Esophagus muscularis mucosa (tissue), 4 donors: ENCODE measurements at regions of chr1 and their contacts with region 1.

Region 1: DNA sequence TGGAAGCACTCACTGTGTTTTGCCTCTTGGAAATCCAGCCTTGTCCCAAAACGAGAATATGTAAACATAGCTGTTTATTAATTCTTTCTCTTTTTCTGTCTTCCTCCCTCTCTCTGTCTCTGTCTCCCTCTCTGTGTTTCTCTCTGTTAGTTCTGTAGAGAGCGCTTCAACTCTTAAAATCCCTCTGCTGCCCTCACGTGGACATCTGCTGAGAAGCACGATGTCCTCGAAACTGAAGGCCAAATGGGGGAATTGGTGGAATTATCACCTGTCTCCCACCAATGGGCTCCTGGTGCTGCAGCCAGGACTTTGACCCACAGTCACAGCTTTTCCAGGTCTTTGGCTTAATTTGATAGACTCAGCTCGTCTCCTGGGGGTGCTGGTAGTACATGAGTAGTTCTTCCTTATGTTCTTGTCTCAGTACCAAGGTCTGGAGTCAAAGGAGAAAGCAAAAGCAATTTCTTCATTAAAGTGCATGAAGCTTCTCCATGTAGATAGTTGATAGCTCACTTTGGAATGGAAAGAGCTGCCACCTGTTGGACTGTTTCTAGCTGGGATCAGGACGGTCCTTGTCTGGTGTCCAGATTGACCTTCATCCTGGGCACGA is 5.5 kb upstream of the GBP6 start:
- DNase-seq: no peak
- H3K4me3 ChIP-seq: no peak overlapping the region
- H3K27ac ChIP-seq: no peak overlapping the region
- H3K4me1 ChIP-seq: peaks cover 6 to 15% (median 14%) of the 10 kb centered on the region in 4 donors
- H3K27me3 ChIP-seq: no peaks in the 10 kb centered on the region
- CTCF ChIP-seq: peak; percentile 77 to 87 (median 79)
- EP300 ChIP-seq: no peak
- POLR2A ChIP-seq: no peak

Region 2: DNA sequence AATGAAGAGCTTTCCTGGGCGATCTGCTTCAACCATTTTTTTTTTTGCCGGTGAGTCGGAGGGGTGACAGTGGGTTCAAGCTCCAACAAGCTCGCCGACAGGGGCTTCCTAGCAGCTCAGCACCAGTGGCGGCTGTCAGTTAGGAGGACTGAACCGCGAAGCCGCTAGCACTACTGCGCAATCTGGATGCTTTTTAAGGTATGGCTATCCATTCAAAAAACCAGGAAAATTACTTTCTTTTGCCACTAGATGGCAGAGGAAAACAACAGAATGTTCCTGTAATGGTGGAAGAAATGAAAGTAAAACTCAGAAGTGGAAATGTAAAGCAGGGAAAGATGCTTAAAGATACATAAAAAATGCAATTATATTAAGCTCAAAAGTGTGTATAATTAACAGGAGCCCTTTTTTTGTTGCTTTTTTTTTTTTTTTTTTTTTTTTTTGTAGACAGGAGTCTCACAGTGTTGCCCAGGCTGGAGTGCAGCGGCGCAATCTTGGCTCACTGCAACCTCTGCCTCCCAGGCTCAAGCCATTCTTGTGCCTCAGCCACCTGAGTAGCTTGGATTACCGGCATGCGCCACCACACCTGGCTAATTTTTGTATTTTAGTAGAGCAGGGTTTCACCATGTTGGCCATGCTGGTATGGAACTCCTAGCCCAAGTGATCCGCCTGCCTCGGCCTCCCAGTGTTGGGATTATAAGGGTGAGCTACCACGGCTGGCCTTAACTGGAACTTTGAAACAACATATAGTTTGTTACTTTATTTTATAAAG is 374.4 kb before region 1 on chr1:
- intact Hi-C with region 1: loop called (anchors 5 kb)
- DNase-seq: no peak
- H3K4me3 ChIP-seq: peak overlapping the region in 3 of 4 donors; percentile 1 to 22 (median 15)
- H3K27ac ChIP-seq: peak overlapping the region; percentile 35 to 63 (median 52)
- H3K4me1 ChIP-seq: peaks cover 19 to 66% (median 57%) of the 10 kb centered on the region in 4 donors
- H3K27me3 ChIP-seq: no peaks in the 10 kb centered on the region
- CTCF ChIP-seq: peak; percentile 56 to 73 (median 65)
- EP300 ChIP-seq: no peak
- POLR2A ChIP-seq: no peak

Region 3: DNA sequence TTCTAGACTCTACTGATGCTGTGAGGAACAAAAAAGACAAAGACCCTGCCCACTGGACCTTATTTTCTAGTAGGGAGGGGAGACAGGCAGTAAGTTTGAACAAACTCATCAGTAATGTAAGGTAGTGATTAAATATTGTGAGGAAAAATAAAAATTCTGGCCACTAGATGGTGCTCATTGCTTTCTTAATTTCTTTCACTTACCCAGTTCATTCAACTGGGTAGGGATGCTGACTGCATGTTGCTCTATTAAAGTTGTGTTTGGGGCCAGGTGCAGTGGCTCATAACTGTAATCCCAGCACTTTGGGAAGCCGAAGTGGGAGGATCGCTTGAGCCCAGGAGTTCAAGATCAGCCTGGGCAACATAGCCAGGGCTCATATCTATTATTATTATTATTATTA is 359.7 kb before region 1 on chr1:
- intact Hi-C with region 1: loop called (anchors 2 kb)
- DNase-seq: no peak
- H3K4me3 ChIP-seq: no peak overlapping the region
- H3K27ac ChIP-seq: no peak overlapping the region
- H3K4me1 ChIP-seq: peaks cover 0 to 10% (median 7%) of the 10 kb centered on the region in 4 donors
- H3K27me3 ChIP-seq: no peaks in the 10 kb centered on the region
- CTCF ChIP-seq: peak; percentile 54 to 64 (median 56)
- EP300 ChIP-seq: no peak
- POLR2A ChIP-seq: no peak

Region 4: GRCh38 chr1:89064632-89065031 is 293.8 kb before region 1 on chr1:
- intact Hi-C with region 1: loop called (anchors 5 kb)
- DNase-seq: no peak
- H3K4me3 ChIP-seq: peak overlapping the region; percentile 56 to 70 (median 63)
- H3K27ac ChIP-seq: peak overlapping the region; percentile 84 to 86 (median 86)
- H3K4me1 ChIP-seq: peaks cover 20 to 47% (median 43%) of the 10 kb centered on the region in 4 donors
- H3K27me3 ChIP-seq: no peaks in the 10 kb centered on the region
- CTCF ChIP-seq: no peak
- EP300 ChIP-seq: no peak
- POLR2A ChIP-seq: no peak

Region 5: DNA sequence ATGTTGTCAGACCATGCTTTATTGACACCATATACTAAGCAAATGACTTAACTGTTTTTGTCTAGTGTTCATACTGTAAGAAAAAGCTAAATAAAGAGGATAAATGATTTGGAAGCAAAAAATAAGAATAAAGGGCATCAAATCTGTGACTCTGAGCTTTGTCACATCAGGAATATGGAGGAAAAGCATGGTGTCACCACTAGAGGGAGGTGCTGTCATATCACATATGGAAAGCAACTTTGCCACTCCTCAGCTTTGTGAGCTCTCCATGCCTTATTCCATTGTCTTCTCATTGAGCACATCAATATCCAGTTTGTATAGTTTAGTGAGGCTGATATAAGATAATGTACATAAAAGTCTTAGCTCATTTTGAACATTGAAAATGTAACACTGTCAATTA is 272.6 kb before region 1 on chr1:
- intact Hi-C with region 1: loop called (anchors 5 kb)
- DNase-seq: no peak
- H3K4me3 ChIP-seq: no peak overlapping the region
- H3K27ac ChIP-seq: no peak overlapping the region
- H3K4me1 ChIP-seq: no peaks in the 10 kb centered on the region
- H3K27me3 ChIP-seq: no peaks in the 10 kb centered on the region
- CTCF ChIP-seq: peak; percentile 61 to 74 (median 67)
- EP300 ChIP-seq: no peak
- POLR2A ChIP-seq: no peak